ENCODE measurements at regions of chr17 and their contacts with region 1.

Region 1: DNA sequence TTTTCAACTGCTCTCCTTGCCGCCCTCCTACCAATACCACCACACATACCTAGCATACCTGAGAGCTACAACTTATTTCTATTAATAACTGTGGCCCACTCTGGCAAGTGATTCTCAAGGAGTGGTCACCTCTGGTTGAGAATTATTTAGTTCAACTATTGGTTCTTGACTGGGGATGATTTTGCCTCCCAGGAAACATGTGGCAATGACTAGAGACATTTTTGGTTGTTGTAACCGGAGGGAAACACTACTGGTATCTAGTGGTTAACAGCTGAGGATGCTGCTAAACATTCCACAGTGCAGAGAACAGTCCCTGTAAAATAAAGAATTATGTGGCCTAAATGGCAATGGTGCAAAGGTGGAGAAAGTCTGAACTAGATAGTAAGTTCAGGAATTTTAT is 96.7 kb downstream of the TRIM37 start:
- DNase-seq: no peak
- H3K4me3 ChIP-seq: no peak overlapping the region
- H3K27ac ChIP-seq: no peak overlapping the region
- H3K4me1 ChIP-seq: no peaks in the 10 kb centered on the region
- H3K27me3 ChIP-seq: no peaks in the 10 kb centered on the region
- CTCF ChIP-seq: no peak
- EP300 ChIP-seq: no peak
- POLR2A ChIP-seq: no peak

Region 2: DNA sequence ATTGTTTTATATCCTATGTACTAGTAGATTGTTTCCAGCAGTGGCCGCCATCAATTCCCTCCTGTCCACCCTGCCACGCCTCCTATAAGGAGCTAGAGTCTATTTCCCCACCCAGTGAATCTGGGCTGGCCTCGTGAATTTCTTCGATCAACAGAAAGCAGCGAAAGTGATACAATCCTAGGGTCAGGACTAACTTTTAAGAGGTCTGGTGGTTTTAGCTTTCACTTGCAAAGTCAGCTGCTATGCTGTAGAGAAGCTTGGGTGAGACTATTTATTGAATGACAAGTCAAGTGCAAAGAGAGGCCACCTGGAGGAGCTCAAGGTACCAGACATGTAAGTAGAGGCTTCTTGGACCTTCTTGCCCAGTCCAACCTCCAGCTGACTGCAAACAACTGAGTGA is 414.7 kb before region 1 on chr17:
- in situ Hi-C with region 1: loop called in 2 of 4 experiments (anchors 10 kb)
- intact Hi-C with region 1: no loop called
- DNase-seq: no peak
- H3K4me3 ChIP-seq: no peak overlapping the region
- H3K27ac ChIP-seq: no peak overlapping the region
- H3K4me1 ChIP-seq: no peaks in the 10 kb centered on the region
- H3K27me3 ChIP-seq: no peaks in the 10 kb centered on the region
- CTCF ChIP-seq: no peak
- EP300 ChIP-seq: no peak
- POLR2A ChIP-seq: no peak

Region 3: GRCh38 chr17:58710936-58711775 is 298.9 kb before region 1 on chr17:
- in situ Hi-C with region 1: loop called (anchors 5 to 10 kb)
- intact Hi-C with region 1: no loop called
- DNase-seq: peak; percentile 10
- H3K4me3 ChIP-seq: no peak overlapping the region
- H3K27ac ChIP-seq: no peak overlapping the region
- H3K4me1 ChIP-seq: no peaks in the 10 kb centered on the region
- H3K27me3 ChIP-seq: no peaks in the 10 kb centered on the region
- CTCF ChIP-seq: peak; percentile 62 to 73 (median 64)
- EP300 ChIP-seq: no peak
- POLR2A ChIP-seq: no peak

Region 4: GRCh38 chr17:59067756-59068155 is 57.7 kb after region 1 on chr17:
- in situ Hi-C with region 1: no loop called
- intact Hi-C with region 1: no loop called
- DNase-seq: no peak
- H3K4me3 ChIP-seq: no peak overlapping the region
- H3K27ac ChIP-seq: no peak overlapping the region
- H3K4me1 ChIP-seq: no peaks in the 10 kb centered on the region
- H3K27me3 ChIP-seq: no peaks in the 10 kb centered on the region
- CTCF ChIP-seq: no peak
- EP300 ChIP-seq: no peak
- POLR2A ChIP-seq: no peak

Measured in transverse colon (tissue), 4 donors.